Heart right ventricle (tissue), 16 donors: ENCODE measurements at regions of chr6 and their contacts with region 1.

Region 1: GRCh38 chr6:69796642-69797390 is at the start of gene LMBRD1:
- DNase-seq: peak; percentile 97 to 98
- ATAC-seq: peak; percentile 96 to 99 (median 98)
- H3K4me3 ChIP-seq: peak within 1 kb of the TSS; percentile 64 to 86 (median 72)
- H3K27ac ChIP-seq: peak within 1 kb of the TSS; percentile 83 to 97 (median 92)
- H3K4me1 ChIP-seq: peaks cover 0 to 45% (median 29%) of the 10 kb centered on the region in 9 donors
- H3K27me3 ChIP-seq: no peaks in the 10 kb centered on the region
- CTCF ChIP-seq: peak; percentile 64 to 97 (median 91)
- total RNA-seq, gene LMBRD1: 36.8 to 63.8 (median 48.0) TPM

Region 2: DNA sequence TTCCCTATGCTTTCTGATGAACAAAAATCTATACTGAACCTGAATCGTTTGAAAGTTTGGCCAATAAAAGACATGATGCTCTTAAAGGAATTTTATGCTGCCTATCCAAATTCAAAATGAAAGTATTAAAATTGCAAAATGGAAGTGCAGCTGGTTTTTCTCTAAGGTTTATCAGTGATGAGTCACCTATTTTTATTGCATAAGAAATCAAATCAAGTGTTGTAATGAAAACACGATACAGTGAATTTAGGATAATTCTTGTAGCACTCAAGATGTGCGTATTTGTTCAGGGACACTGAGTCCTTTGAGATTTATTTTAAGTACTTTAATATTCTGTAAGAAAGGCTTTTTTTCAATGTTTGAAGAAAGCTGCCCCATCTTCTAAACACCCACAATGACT is 752.3 kb before region 1 on chr6:
- intact Hi-C with region 1: no loop called
- DNase-seq: no peak
- ATAC-seq: no peak
- H3K4me3 ChIP-seq: no peak overlapping the region
- H3K27ac ChIP-seq: no peak overlapping the region
- H3K4me1 ChIP-seq: no peaks in the 10 kb centered on the region
- H3K27me3 ChIP-seq: no peaks in the 10 kb centered on the region
- CTCF ChIP-seq: no peak

Region 3: GRCh38 chr6:69719602-69720193 is 77.1 kb before region 1 on chr6:
- intact Hi-C with region 1: no loop called
- DNase-seq: no peak
- ATAC-seq: no peak
- H3K4me3 ChIP-seq: no peak overlapping the region
- H3K27ac ChIP-seq: no peak overlapping the region
- H3K4me1 ChIP-seq: no peaks in the 10 kb centered on the region
- H3K27me3 ChIP-seq: no peaks in the 10 kb centered on the region
- CTCF ChIP-seq: peak in 6 of 9 donors; percentile 29 to 52 (median 42)

Region 4: DNA sequence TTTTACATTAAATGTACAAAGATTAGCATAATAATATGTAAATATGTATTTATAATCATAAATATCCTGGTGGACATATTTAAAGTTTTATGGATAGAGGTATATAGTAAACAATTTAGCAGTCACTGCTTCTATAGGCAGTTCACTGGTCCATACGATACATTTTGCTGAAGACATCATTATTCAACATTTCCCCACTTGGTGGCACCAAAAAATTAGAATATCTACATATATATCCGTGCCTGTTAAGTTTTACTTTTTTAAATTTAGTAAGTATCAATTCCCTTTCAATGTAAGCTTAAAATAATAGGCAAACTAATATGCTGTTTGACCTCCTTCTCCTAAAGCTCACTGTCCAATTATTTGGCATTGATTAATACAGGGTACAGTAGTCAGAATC is 64.2 kb before region 1 on chr6:
- intact Hi-C with region 1: loop called in 1 of 10 experiments (anchors 10 kb)
- DNase-seq: no peak
- ATAC-seq: no peak
- H3K4me3 ChIP-seq: no peak overlapping the region
- H3K27ac ChIP-seq: no peak overlapping the region
- H3K4me1 ChIP-seq: no peaks in the 10 kb centered on the region
- H3K27me3 ChIP-seq: no peaks in the 10 kb centered on the region
- CTCF ChIP-seq: peak in 4 of 9 donors; percentile 10 to 32 (median 20)

Region 5: GRCh38 chr6:70413114-70413991 is 616.5 kb after region 1 on chr6 and contains the start of gene FAM135A:
- intact Hi-C with region 1: loop called in 1 of 10 experiments (anchors 10 kb)
- DNase-seq: peak; percentile 97 to 98
- ATAC-seq: peak; percentile 98 to 100 (median 99)
- H3K4me3 ChIP-seq: peak within 1 kb of the TSS; percentile 65 to 100 (median 98)
- H3K27ac ChIP-seq: peak within 1 kb of the TSS; percentile 65 to 94 (median 86)
- H3K4me1 ChIP-seq: peaks cover 0 to 28% (median 18%) of the 10 kb centered on the region in 9 donors
- H3K27me3 ChIP-seq: no peaks in the 10 kb centered on the region
- CTCF ChIP-seq: no peak
- total RNA-seq, gene FAM135A: 10.5 to 18.0 (median 12.8) TPM